Activated B cell treated with CpG ODN at 0.5 μM for 24 hours (primary cell): ENCODE measurements at regions of chr14 and their contacts with region 1.

Region 1: DNA sequence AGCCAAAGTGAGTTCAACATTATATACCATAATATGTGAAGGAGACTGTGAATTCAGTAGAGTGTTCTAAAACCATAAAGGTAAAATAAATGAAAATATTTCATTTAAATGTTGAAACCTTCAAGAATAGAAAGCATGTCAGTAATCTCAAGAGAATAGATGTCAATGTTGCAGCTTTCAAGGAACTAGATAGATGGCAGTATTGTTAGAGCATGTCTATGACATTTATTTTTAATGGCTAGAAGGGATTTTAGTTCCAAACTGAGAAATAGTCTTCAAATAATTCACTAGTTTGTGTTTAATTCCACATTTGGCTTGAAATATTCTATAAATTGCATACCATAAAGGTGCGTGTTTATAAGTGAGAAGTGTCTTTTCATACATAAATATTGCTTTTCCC is 326.5 kb downstream of the FLRT2 start:
- DNase-seq: no peak
- ATAC-seq: no peak
- H3K4me3 Mint-ChIP-seq: no peak overlapping the region
- H3K27ac Mint-ChIP-seq: no peak overlapping the region
- H3K4me1 Mint-ChIP-seq: no peaks in the 10 kb centered on the region
- H3K27me3 Mint-ChIP-seq: no peaks in the 10 kb centered on the region
- CTCF ChIP-seq: no peak

Region 2: DNA sequence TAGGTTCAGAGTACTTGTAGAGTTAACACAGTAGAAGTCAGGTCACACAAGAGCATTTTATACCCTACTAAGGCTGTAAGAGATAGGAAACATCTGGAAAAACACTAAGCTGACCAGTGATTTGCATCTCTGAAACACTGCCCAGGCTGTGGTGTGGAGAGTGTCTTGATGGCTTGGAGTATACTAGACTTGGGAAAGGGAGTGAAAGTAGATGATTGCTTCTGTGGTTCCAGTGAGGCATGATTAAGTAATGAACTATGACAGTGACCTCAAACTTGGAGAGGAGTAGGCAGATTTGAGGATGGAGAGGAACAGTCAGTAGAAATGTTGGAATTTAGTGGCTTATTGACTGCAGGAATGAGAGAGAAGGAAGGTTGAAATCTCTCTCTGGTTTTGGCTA is 125.2 kb before region 1 on chr14:
- CTCF ChIA-PET with region 1: no interaction called
- POLR2A ChIA-PET with region 1: no interaction called
- intact Hi-C with region 1: no loop called
- DNase-seq: no peak
- ATAC-seq: no peak
- H3K4me3 Mint-ChIP-seq: no peak overlapping the region
- H3K27ac Mint-ChIP-seq: no peak overlapping the region
- H3K4me1 Mint-ChIP-seq: no peaks in the 10 kb centered on the region
- H3K27me3 Mint-ChIP-seq: no peaks in the 10 kb centered on the region
- CTCF ChIP-seq: no peak

Region 3: DNA sequence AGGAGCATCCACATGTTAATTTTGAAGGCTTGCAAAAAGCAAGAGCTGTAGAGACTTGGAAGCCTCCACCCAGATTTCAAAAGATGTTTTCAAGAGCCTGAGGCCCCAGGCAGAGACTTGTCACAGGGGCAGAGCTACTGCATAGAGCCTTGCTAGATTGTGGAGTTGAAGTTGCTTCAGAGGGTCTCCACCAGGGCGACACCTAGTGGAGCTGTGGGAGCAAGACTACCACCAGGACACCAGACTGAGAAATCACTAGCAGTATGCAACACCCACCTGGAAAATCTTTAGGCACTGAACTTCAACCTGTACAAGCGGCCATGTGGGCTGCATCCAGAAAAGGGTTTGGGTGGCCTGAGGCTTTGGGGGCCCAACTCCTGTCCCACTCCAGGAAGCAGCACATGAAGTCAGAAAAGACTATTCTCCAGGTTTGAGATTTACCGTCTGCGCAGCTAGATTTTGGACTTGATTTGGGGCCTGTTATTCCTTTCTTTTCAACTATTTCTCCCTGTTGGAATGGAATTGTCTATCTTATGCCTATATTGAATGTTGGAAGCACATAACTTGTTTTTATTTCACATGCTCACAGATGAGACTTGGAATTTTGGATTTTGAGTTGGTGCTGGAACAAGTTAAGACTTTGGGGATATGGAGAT is 182.1 kb after region 1 on chr14:
- CTCF ChIA-PET with region 1: no interaction called
- POLR2A ChIA-PET with region 1: no interaction called
- intact Hi-C with region 1: loop called (anchors 2 kb)
- DNase-seq: no peak
- ATAC-seq: no peak
- H3K4me3 Mint-ChIP-seq: no peak overlapping the region
- H3K27ac Mint-ChIP-seq: no peak overlapping the region
- H3K4me1 Mint-ChIP-seq: no peaks in the 10 kb centered on the region
- H3K27me3 Mint-ChIP-seq: no peaks in the 10 kb centered on the region
- CTCF ChIP-seq: no peak

Region 4: GRCh38 chr14:86057018-86057667 is 200.7 kb after region 1 on chr14:
- CTCF ChIA-PET with region 1: no interaction called
- POLR2A ChIA-PET with region 1: no interaction called
- intact Hi-C with region 1: loop called (anchors 5 kb)
- DNase-seq: no peak
- ATAC-seq: no peak
- H3K4me3 Mint-ChIP-seq: no peak overlapping the region
- H3K27ac Mint-ChIP-seq: no peak overlapping the region
- H3K4me1 Mint-ChIP-seq: peaks cover 6% of the 10 kb centered on the region
- H3K27me3 Mint-ChIP-seq: no peaks in the 10 kb centered on the region
- CTCF ChIP-seq: peak; percentile 17